Keratinocyte (primary cell): ENCODE measurements at regions of chrX and their contacts with region 1.

Region 1: GRCh38 chrX:126770194-126770593 is 49.3 kb upstream of the PRR32 start:
- DNase-seq: no peak
- H3K4me3 ChIP-seq: no peak overlapping the region
- H3K27ac ChIP-seq: no peak overlapping the region
- H3K4me1 ChIP-seq: no peaks in the 10 kb centered on the region
- H3K27me3 ChIP-seq: no peaks in the 10 kb centered on the region
- CTCF ChIP-seq: peak; percentile 64 to 67 (median 65)

Region 2: GRCh38 chrX:127038065-127038464 is 267.9 kb after region 1 on chrX:
- dilution Hi-C with region 1: loop called (anchors 25 kb)
- DNase-seq: no peak
- H3K4me3 ChIP-seq: no peak overlapping the region
- H3K27ac ChIP-seq: no peak overlapping the region
- H3K4me1 ChIP-seq: peaks cover 3% of the 10 kb centered on the region
- H3K27me3 ChIP-seq: no peaks in the 10 kb centered on the region
- CTCF ChIP-seq: peak in 2 of 3 experiments; percentile 24 to 30